Heart left ventricle (tissue), 16 donors: ENCODE measurements at regions of chr11 and their contacts with region 1.

Region 1: DNA sequence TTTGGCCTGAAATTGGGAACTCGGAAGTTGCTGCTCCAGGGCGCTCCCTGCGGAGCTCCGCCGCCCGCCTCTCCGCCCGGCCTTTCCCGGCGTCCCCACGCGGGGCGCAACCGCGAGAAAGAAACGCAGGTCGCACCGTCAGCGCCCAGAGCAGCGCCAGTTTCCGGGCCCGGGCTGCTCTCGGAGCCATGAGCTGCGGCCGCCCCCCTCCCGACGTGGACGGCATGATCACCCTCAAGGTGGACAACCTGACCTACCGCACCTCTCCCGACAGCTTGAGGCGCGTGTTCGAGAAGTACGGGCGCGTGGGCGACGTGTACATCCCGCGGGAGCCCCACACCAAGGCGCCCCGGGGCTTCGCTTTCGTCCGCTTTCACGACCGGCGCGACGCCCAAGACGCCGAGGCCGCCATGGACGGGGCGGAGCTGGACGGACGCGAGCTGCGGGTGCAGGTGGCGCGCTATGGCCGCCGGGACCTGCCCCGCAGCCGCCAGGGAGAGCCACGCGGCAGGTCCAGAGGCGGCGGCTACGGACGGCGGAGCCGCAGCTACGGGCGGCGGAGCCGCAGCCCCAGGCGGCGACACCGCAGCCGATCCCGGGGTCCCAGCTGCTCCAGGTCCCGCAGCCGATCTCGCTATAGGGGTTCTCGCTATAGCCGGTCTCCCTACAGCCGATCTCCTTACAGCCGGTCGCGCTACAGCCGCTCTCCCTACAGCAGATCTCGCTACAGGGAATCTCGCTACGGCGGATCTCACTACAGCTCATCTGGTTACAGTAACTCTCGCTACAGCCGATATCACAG is 521 bp downstream of the SRSF8 start:
- DNase-seq: peak; percentile 85 to 93 (median 89)
- ATAC-seq: peak; percentile 65 to 91 (median 86)
- H3K4me3 ChIP-seq: peak overlapping the region; percentile 62 to 92 (median 78)
- H3K27ac ChIP-seq: peak overlapping the region; percentile 93 to 99 (median 96)
- H3K4me1 ChIP-seq: peaks cover 3 to 24% (median 13%) of the 10 kb centered on the region in 12 donors
- H3K27me3 ChIP-seq: no peaks in the 10 kb centered on the region
- CTCF ChIP-seq: peak; percentile 35 to 83 (median 62)
- POLR2A ChIP-seq: peak in 1 of 2 donors; percentile 49

Region 2: DNA sequence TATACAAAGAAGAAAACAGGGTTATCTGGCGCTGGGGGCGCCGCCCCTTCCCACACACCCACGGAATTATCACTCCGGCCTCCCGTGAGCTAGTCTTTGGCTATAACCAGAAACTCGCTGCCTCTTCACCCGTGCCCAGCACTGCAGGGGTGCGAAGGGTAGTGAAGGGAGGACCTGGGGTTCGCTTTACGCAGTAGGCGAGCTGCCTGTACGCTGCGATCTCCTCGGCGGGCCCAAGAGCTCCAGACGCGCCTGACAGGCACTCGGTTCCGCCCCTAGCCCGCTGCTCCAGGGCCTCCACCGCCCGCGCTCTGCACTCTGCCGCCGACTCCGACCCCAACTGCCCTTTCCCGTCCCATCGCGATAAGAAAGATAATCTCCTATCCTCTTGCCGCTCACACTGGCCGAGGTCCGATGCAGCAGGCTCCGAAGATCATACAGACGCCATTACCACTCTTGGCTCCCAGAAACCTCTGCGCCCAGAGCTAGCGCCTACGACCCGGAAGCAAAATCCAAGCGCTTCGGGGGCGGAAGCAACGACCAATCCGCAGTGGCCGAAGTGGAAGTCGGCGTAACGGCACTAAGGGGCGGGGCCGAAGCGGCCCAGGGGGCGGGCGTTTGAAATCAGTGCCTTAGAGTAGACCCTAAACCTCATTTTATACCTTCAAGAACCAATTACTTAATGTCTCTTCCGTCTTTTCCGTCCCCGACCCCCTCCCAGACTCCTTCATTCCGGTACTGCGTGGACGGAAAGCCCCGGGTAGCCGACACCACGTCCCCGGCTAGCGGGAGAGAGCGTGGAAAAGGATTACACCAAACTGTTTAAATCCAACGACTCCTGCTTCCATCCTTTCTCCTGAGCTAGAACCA is 93.9 kb before region 1 on chr11 and contains the starts of genes CWC15 and KDM4D:
- intact Hi-C with region 1: loop called in 4 of 10 experiments (anchors 5 to 10 kb)
- DNase-seq: peak; percentile 96
- ATAC-seq: peak; percentile 99 to 100 (median 100)
- H3K4me3 ChIP-seq: peak within 1 kb of the TSS; percentile 71 to 93 (median 87)
- H3K27ac ChIP-seq: peak within 1 kb of the TSS in 11 of 12 donors; percentile 57 to 89 (median 80)
- H3K4me1 ChIP-seq: peaks cover 4 to 19% (median 12%) of the 10 kb centered on the region in 12 donors
- H3K27me3 ChIP-seq: no peaks in the 10 kb centered on the region
- CTCF ChIP-seq: peak in 1 of 12 donors; percentile 15
- POLR2A ChIP-seq: no peak
- total RNA-seq, gene CWC15: 54.4 to 81.8 (median 62.6) TPM
- total RNA-seq, gene KDM4D: 0.65 to 1.3 (median 0.95) TPM in 8 of 9 donors, not detected in the other

Region 3: GRCh38 chr11:95089620-95090542 is 22.6 kb after region 1 on chr11 and contains the start of gene ENDOD1:
- intact Hi-C with region 1: loop called in 3 of 10 experiments (anchors 1 to 2 kb)
- DNase-seq: peak; percentile 88 to 94 (median 88)
- ATAC-seq: peak; percentile 94 to 99 (median 97)
- H3K4me3 ChIP-seq: peak within 1 kb of the TSS; percentile 77 to 96 (median 92)
- H3K27ac ChIP-seq: peak within 1 kb of the TSS; percentile 63 to 98 (median 93)
- H3K4me1 ChIP-seq: peaks cover 0 to 40% (median 22%) of the 10 kb centered on the region in 12 donors
- H3K27me3 ChIP-seq: no peaks in the 10 kb centered on the region
- CTCF ChIP-seq: peak in 3 of 12 donors; percentile 10 to 29 (median 10)
- POLR2A ChIP-seq: peak in 1 of 2 donors; percentile 73
- total RNA-seq, gene ENDOD1: 9.7 to 28.5 (median 12.9) TPM

Region 4: GRCh38 chr11:95119374-95120060 is 52.3 kb after region 1 on chr11:
- intact Hi-C with region 1: no loop called
- DNase-seq: no peak
- ATAC-seq: no peak
- H3K4me3 ChIP-seq: no peak overlapping the region
- H3K27ac ChIP-seq: no peak overlapping the region
- H3K4me1 ChIP-seq: peaks cover 0 to 19% (median 4%) of the 10 kb centered on the region in 12 donors
- H3K27me3 ChIP-seq: no peaks in the 10 kb centered on the region
- CTCF ChIP-seq: no peak
- POLR2A ChIP-seq: no peak

Region 5: GRCh38 chr11:95138448-95138847 is 71.2 kb after region 1 on chr11:
- intact Hi-C with region 1: loop called in 2 of 10 experiments (anchors 5 kb)
- DNase-seq: no peak
- ATAC-seq: peak in 2 of 4 donors; percentile 55 to 66
- H3K4me3 ChIP-seq: no peak overlapping the region
- H3K27ac ChIP-seq: no peak overlapping the region
- H3K4me1 ChIP-seq: peaks cover 0 to 12% (median 3%) of the 10 kb centered on the region in 12 donors
- H3K27me3 ChIP-seq: no peaks in the 10 kb centered on the region
- CTCF ChIP-seq: peak in 8 of 12 donors; percentile 8 to 43 (median 23)
- POLR2A ChIP-seq: no peak

Region 6: GRCh38 chr11:95231127-95231880 is 164.1 kb after region 1 on chr11 and contains the start of gene SESN3:
- intact Hi-C with region 1: loop called in 2 of 10 experiments (anchors 2 to 10 kb)
- DNase-seq: peak; percentile 99
- ATAC-seq: peak; percentile 98 to 99 (median 98)
- H3K4me3 ChIP-seq: peak within 1 kb of the TSS; percentile 78 to 95 (median 88)
- H3K27ac ChIP-seq: peak within 1 kb of the TSS; percentile 36 to 90 (median 81)
- H3K4me1 ChIP-seq: peaks cover 0 to 48% (median 9%) of the 10 kb centered on the region in 12 donors
- H3K27me3 ChIP-seq: no peaks in the 10 kb centered on the region
- CTCF ChIP-seq: peak in 5 of 12 donors; percentile 15 to 43 (median 39)
- POLR2A ChIP-seq: peak in 1 of 2 donors; percentile 78
- total RNA-seq, gene SESN3: 3.1 to 26.5 (median 5.8) TPM